ENCODE measurements at regions of chr1 and their contacts with region 1.

Region 1: GRCh38 chr1:87328272-87329050 is at the start of gene LMO4:
- DNase-seq: peak; percentile 78
- H3K4me3 Mint-ChIP-seq: peak within 1 kb of the TSS; percentile 94
- H3K27ac Mint-ChIP-seq: peak within 1 kb of the TSS; percentile 95
- H3K4me1 Mint-ChIP-seq: peaks cover 45% of the 10 kb centered on the region
- H3K27me3 Mint-ChIP-seq: peaks cover 5% of the 10 kb centered on the region
- total RNA-seq, gene LMO4: 41.1 and 47.8 TPM in 2 replicates

Region 2: GRCh38 chr1:85707990-85708828 is 1620.3 kb before region 1 on chr1 and contains the start of gene ZNHIT6:
- intact Hi-C with region 1: loop called (anchors 5 kb)
- DNase-seq: peak; percentile 82
- H3K4me3 Mint-ChIP-seq: no peak within 1 kb of the TSS
- H3K27ac Mint-ChIP-seq: no peak within 1 kb of the TSS
- H3K4me1 Mint-ChIP-seq: peaks cover 11% of the 10 kb centered on the region
- H3K27me3 Mint-ChIP-seq: no peaks in the 10 kb centered on the region
- total RNA-seq, gene ZNHIT6: 24.6 and 26.3 TPM in 2 replicates

Region 3: GRCh38 chr1:86395771-86396497 is 932.5 kb before region 1 on chr1 and contains the start of gene ODF2L:
- intact Hi-C with region 1: loop called (anchors 5 kb)
- DNase-seq: peak; percentile 90
- H3K4me3 Mint-ChIP-seq: peak within 1 kb of the TSS; percentile 97
- H3K27ac Mint-ChIP-seq: peak within 1 kb of the TSS; percentile 96
- H3K4me1 Mint-ChIP-seq: peaks cover 54% of the 10 kb centered on the region
- H3K27me3 Mint-ChIP-seq: no peaks in the 10 kb centered on the region
- total RNA-seq, gene ODF2L: 21.0 and 22.4 TPM in 2 replicates

Region 4: GRCh38 chr1:86913896-86914634 is 414.4 kb before region 1 on chr1 and contains the start of gene SELENOF:
- intact Hi-C with region 1: loop called (anchors 2 kb)
- DNase-seq: peak; percentile 98
- H3K4me3 Mint-ChIP-seq: no peak within 1 kb of the TSS
- H3K27ac Mint-ChIP-seq: no peak within 1 kb of the TSS
- H3K4me1 Mint-ChIP-seq: peaks cover 38% of the 10 kb centered on the region
- H3K27me3 Mint-ChIP-seq: no peaks in the 10 kb centered on the region
- total RNA-seq, gene SELENOF: 174 and 198 TPM in 2 replicates

Region 5: GRCh38 chr1:87131809-87132283 is 196.6 kb before region 1 on chr1:
- intact Hi-C with region 1: loop called (anchors 2 kb)
- DNase-seq: peak; percentile 59
- H3K4me3 Mint-ChIP-seq: peak overlapping the region; percentile 76
- H3K27ac Mint-ChIP-seq: no peak overlapping the region
- H3K4me1 Mint-ChIP-seq: no peaks in the 10 kb centered on the region
- H3K27me3 Mint-ChIP-seq: peaks cover 32% of the 10 kb centered on the region

Region 6: GRCh38 chr1:87449348-87449963 is 121.0 kb after region 1 on chr1:
- intact Hi-C with region 1: loop called (anchors 5 kb)
- DNase-seq: no peak
- H3K4me3 Mint-ChIP-seq: no peak overlapping the region
- H3K27ac Mint-ChIP-seq: no peak overlapping the region
- H3K4me1 Mint-ChIP-seq: peaks cover 9% of the 10 kb centered on the region
- H3K27me3 Mint-ChIP-seq: peaks cover 8% of the 10 kb centered on the region

Region 7: DNA sequence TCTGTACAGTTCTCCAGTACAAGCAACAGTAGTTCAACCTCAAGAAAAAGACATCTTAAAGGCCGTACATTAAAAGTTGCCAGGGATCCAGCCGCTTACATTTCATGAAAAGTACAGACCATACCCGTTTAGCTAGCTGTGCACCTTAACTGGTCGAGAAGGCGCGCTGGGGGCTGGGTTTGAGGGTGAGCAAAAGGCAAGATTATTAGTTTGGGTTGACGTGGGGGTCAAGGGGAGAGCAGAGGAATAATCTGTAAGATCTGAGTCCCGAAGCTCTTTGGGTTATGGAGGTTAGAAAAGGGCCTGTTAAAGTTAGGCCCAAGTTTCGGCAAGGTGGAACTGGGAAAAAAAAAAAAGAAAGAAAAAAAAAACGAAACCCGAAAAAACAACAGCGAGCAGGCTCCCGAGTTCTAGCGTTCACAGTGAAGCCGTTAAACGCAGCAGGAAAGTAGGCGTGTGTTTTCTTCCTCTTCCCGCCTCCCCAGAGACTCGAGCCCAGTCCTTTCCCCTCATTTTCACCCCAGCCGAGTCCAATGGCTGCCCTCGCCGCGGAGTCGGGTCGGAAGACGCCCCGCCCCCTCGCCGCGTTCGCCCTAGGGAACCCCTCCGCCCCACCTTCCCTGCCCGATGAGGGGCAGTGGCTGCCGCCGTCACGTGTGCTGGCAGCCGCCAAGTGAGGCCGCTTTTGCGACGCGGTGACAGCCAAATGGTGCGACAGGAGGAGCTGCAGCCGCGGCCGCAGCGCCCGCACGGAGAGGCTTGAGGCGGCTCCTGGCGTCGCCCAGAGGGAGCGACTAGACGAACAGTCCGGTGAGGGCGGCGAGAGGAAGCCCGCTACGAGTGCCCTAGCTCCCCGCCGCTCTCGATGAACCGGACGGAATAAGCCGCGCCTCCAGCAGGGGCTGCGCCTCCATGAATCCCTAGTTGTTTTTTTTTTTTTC is 1355.3 kb after region 1 on chr1 and contains the start of gene PKN2:
- intact Hi-C with region 1: loop called (anchors 2 kb)
- DNase-seq: peak; percentile 97
- H3K4me3 Mint-ChIP-seq: peak within 1 kb of the TSS; percentile 100
- H3K27ac Mint-ChIP-seq: peak within 1 kb of the TSS; percentile 100
- H3K4me1 Mint-ChIP-seq: peaks cover 35% of the 10 kb centered on the region
- H3K27me3 Mint-ChIP-seq: peaks cover 5% of the 10 kb centered on the region
- total RNA-seq, gene PKN2: 23.8 and 26.0 TPM in 2 replicates